Transverse colon (tissue), 4 donors: ENCODE measurements at regions of chr4 and their contacts with region 1.

Region 1: DNA sequence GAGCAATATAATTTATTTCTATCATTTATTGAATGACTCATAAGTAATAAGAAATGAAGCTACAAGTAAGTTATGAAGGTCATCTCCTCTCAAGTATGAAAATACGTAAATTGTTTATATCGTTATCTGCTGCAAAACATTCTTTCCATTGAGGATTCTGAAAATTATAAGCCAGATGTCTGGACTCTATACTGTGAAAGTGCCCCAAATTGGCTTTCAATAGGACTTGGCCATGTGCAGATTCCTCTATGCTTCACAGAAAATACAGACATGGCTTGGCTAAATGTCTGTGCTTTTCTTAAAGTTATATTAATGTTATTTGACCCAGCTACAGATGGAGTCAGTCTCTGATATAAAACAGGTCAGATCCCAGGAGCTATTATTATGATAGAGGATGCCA is 2109.9 kb upstream of the AGA start:
- DNase-seq: no peak
- H3K4me3 ChIP-seq: no peak overlapping the region
- H3K27ac ChIP-seq: no peak overlapping the region
- H3K4me1 ChIP-seq: no peaks in the 10 kb centered on the region
- H3K27me3 ChIP-seq: no peaks in the 10 kb centered on the region
- CTCF ChIP-seq: no peak
- EP300 ChIP-seq: no peak
- POLR2A ChIP-seq: no peak

Region 2: DNA sequence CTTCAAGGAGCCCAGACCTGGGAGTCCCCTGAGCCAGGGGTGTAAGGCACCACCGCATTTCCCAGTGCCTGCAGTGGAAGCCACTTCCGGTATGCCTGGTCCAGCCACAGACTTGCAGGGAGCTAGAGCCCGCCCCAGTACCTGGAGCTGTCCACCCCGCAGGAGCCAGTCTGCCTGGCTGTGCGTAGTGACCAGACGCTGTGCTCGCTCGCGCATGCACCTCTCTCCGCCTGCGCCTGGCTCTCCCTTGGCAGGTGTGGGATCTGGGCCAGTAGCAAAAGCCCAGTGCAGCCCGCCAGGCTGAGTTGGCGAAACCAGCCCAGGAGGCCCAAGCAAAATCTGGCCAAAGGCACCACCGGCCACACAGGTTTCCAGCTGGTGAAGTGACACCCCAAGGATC is 1136.2 kb before region 1 on chr4:
- in situ Hi-C with region 1: no loop called
- intact Hi-C with region 1: no loop called
- DNase-seq: no peak
- H3K4me3 ChIP-seq: no peak overlapping the region
- H3K27ac ChIP-seq: no peak overlapping the region
- H3K4me1 ChIP-seq: peaks cover 0 to 8% (median 0%) of the 10 kb centered on the region in 4 donors
- H3K27me3 ChIP-seq: no peaks in the 10 kb centered on the region
- CTCF ChIP-seq: no peak
- EP300 ChIP-seq: no peak
- POLR2A ChIP-seq: no peak

Region 3: DNA sequence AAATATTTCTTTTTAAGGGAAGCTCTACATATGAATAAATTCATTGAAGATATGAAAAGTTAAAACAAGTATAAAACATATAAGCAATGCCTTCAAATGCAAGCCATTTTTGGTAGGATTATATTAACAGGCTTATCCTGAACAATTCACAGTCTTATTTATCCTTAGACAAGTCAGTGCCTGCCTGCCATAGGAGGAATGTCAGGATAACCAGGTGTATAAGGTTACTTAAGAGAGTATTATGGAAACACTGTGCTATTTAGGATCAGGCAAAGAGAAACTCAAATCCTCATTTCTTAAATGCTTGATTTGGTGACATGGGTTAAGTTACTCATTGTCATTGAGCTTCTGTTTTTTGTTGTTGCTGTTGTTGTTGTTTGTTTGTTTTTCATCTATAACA is 80.0 kb before region 1 on chr4:
- in situ Hi-C with region 1: no loop called
- intact Hi-C with region 1: no loop called
- DNase-seq: no peak
- H3K4me3 ChIP-seq: no peak overlapping the region
- H3K27ac ChIP-seq: no peak overlapping the region
- H3K4me1 ChIP-seq: no peaks in the 10 kb centered on the region
- H3K27me3 ChIP-seq: no peaks in the 10 kb centered on the region
- CTCF ChIP-seq: no peak
- EP300 ChIP-seq: no peak
- POLR2A ChIP-seq: no peak

Region 4: DNA sequence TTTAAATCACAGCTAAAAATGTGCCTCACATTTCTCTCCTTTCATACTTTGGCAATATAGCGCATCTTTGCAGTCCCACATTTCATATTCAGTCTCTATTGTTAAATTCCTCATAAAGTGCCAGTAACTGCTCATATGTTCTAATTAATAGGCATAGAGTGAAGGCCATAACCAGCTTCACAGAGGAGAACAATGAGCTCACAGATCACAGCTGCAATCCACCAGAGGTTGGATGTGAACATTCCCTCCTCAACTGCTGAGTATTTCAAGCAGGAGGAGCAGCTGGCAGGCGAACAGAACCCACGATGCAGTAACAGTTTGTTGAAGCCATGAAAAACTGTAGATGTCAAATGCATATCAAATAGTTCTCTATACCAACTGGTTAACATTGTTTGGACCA is 21.2 kb before region 1 on chr4:
- in situ Hi-C with region 1: no loop called
- intact Hi-C with region 1: loop called (anchors 1 kb)
- DNase-seq: no peak
- H3K4me3 ChIP-seq: no peak overlapping the region
- H3K27ac ChIP-seq: no peak overlapping the region
- H3K4me1 ChIP-seq: no peaks in the 10 kb centered on the region
- H3K27me3 ChIP-seq: no peaks in the 10 kb centered on the region
- CTCF ChIP-seq: no peak
- EP300 ChIP-seq: no peak
- POLR2A ChIP-seq: no peak